ENCODE measurements at regions of chr2 and their contacts with region 1.

Region 1: GRCh38 chr2:105757433-105757832 is 12.7 kb downstream of the NCK2 start:
- DNase-seq: no peak
- H3K4me3 Mint-ChIP-seq: no peak overlapping the region
- H3K27ac Mint-ChIP-seq: peak overlapping the region; percentile 95
- H3K4me1 Mint-ChIP-seq: peaks cover 98% of the 10 kb centered on the region
- H3K27me3 Mint-ChIP-seq: no peaks in the 10 kb centered on the region

Region 2: DNA sequence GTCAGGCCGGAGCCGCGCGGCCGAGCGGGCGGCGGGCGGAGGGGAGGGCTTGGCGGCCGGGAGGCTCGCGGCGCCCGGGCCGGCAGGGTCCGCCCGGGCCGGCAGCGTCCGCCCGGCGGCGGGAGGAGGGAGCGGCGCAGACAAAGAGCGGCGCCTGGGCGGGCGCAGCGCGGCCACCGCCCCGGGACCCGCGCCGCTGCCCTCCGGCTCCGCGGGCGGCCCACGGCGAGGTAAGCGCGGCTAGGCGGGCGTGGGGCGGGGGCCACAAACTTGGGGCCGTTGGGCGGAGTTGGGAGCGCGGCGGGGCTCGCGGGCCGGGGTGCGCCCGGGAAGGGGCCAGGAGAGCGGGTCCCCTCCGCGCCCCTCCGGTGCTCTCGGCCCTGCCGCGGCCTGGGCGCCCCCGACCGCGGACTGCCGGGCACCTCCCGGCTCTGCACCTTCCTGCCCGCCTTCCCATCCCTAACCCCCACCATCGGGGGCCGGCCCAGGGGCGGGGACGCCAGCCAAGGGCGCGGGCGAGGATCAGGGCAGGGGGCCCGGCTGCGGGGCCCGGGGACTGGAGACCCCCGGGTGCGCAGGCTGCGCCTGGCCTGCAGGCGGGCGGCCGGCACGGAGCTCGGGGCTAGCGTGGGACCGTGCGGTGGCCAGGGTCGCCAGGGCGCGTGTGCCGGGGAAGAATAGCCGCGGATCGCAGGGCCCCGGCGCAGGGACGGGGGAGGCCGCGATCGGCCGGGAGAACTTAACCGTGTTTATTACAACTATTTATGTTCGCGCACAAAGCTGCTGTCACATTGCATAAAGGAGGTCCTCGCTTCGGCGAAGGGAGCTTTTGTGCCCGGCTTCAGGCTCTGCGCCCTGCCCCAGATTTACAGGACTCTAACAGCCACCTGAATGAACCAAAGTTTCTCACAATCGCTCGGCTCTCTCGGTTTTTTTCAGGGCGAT is 12.3 kb before region 1 on chr2 and contains the start of gene NCK2:
- CTCF ChIA-PET with region 1: interaction called, 17 read pairs
- POLR2A ChIA-PET with region 1: interaction called, 6 read pairs
- DNase-seq: peak; percentile 33
- H3K4me3 Mint-ChIP-seq: peak within 1 kb of the TSS; percentile 86
- H3K27ac Mint-ChIP-seq: peak within 1 kb of the TSS; percentile 95
- H3K4me1 Mint-ChIP-seq: peaks cover 71% of the 10 kb centered on the region
- H3K27me3 Mint-ChIP-seq: no peaks in the 10 kb centered on the region
- total RNA-seq, gene NCK2: 73.3 to 84.1 TPM

Region 3: DNA sequence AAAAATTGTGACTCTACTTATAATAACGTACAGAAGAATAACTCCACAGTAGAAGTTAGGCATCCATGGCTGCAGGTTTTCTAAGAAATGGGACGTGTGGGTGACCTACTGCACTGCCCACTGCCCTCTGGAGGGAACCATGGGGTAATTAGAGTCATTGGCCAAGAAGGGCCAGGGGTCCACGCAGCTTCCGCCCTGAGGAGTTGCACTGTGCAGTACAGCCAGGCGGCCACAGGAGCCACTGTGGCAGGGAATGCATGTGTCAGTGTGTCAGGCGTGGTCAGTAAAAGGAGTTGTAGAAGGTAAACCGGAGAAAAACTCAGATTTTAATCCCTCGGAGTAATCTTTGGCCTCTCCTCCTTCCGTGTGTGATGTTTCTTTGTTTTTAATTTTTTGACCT is 12.1 kb after region 1 on chr2:
- CTCF ChIA-PET with region 1: interaction called, 13 read pairs
- POLR2A ChIA-PET with region 1: no interaction called
- DNase-seq: no peak
- H3K4me3 Mint-ChIP-seq: peak overlapping the region; percentile 41
- H3K27ac Mint-ChIP-seq: peak overlapping the region; percentile 87
- H3K4me1 Mint-ChIP-seq: peaks cover 96% of the 10 kb centered on the region
- H3K27me3 Mint-ChIP-seq: no peaks in the 10 kb centered on the region

Measured in activated CD4-positive, alpha-beta T cell treated with anti-CD3 and anti-CD28 coated beads, Interleukin-2, amount 10 ng/mL, durations not matched to agents 7 days and 5 days (primary cell).